ENCODE measurements at regions of chr2 and their contacts with region 1.

Region 1: GRCh38 chr2:51158251-51158650 is 126.3 kb upstream of the NRXN1 start:
- DNase-seq: no peak
- H3K4me3 ChIP-seq: no peak overlapping the region
- H3K27ac ChIP-seq: no peak overlapping the region
- H3K4me1 ChIP-seq: no peaks in the 10 kb centered on the region
- H3K27me3 ChIP-seq: no peaks in the 10 kb centered on the region
- CTCF ChIP-seq: no peak
- EP300 ChIP-seq: no peak
- POLR2A ChIP-seq: no peak

Region 2: GRCh38 chr2:51322612-51323011 is 164.4 kb after region 1 on chr2:
- in situ Hi-C with region 1: no loop called
- intact Hi-C with region 1: loop called (anchors 2 kb)
- DNase-seq: no peak
- H3K4me3 ChIP-seq: no peak overlapping the region
- H3K27ac ChIP-seq: no peak overlapping the region
- H3K4me1 ChIP-seq: no peaks in the 10 kb centered on the region
- H3K27me3 ChIP-seq: no peaks in the 10 kb centered on the region
- CTCF ChIP-seq: no peak
- EP300 ChIP-seq: no peak
- POLR2A ChIP-seq: no peak

Measured in transverse colon (tissue), 4 donors.